Left lung (tissue), 14 donors: ENCODE measurements at regions of chr7 and their contacts with region 1.

Region 1: GRCh38 chr7:31633894-31634494 is 53.0 kb upstream of the PPP1R17 start:
- DNase-seq: peak in 2 of 4 donors; percentile 48 to 78
- ATAC-seq: peak; percentile 98
- H3K4me3 ChIP-seq: no peak overlapping the region
- H3K27ac ChIP-seq: no peak overlapping the region
- H3K4me1 ChIP-seq: no peaks in the 10 kb centered on the region
- H3K27me3 ChIP-seq: no peaks in the 10 kb centered on the region
- CTCF ChIP-seq: peak; percentile 54 to 58

Region 2: GRCh38 chr7:31134246-31135188 is 499.5 kb before region 1 on chr7:
- intact Hi-C with region 1: loop called in 1 of 2 experiments (anchors 10 kb)
- DNase-seq: peak; percentile 55 to 86 (median 76)
- ATAC-seq: peak; percentile 99
- H3K4me3 ChIP-seq: no peak overlapping the region
- H3K27ac ChIP-seq: no peak overlapping the region
- H3K4me1 ChIP-seq: no peaks in the 10 kb centered on the region
- H3K27me3 ChIP-seq: no peaks in the 10 kb centered on the region
- CTCF ChIP-seq: peak; percentile 74 to 79

Region 3: GRCh38 chr7:31443457-31443856 is 190.5 kb before region 1 on chr7:
- intact Hi-C with region 1: loop called in 1 of 2 experiments (anchors 10 kb)
- DNase-seq: no peak
- ATAC-seq: peak; percentile 93
- H3K4me3 ChIP-seq: no peak overlapping the region
- H3K27ac ChIP-seq: no peak overlapping the region
- H3K4me1 ChIP-seq: no peaks in the 10 kb centered on the region
- H3K27me3 ChIP-seq: peaks cover 0 to 7% of the 10 kb centered on the region in 2 donors
- CTCF ChIP-seq: peak; percentile 66 to 91

Region 4: DNA sequence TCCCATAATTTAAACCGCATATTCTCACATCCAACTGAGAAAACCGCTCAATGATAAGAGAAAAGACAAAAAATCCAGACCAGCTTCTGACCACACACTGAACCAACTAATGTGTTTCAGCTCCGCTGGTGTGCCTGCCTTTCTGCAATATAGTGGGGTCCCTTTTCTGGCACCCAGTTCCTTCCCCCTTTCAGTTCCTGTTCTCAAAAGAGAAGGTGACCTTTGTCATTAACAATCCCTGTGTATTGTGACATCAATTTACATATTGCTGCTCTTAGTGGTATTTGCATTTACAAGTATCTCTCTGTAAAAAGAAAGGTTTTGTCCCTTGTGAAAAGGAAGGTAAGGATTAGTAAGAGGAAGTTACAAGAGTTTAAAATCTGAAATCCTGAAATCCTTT is 54.4 kb after region 1 on chr7:
- intact Hi-C with region 1: no loop called
- DNase-seq: no peak
- ATAC-seq: peak; percentile 35
- H3K4me3 ChIP-seq: no peak overlapping the region
- H3K27ac ChIP-seq: no peak overlapping the region
- H3K4me1 ChIP-seq: peaks cover 0 to 6% of the 10 kb centered on the region in 2 donors
- H3K27me3 ChIP-seq: no peaks in the 10 kb centered on the region
- CTCF ChIP-seq: no peak

Region 5: GRCh38 chr7:31710171-31710570 is 76.2 kb after region 1 on chr7:
- intact Hi-C with region 1: no loop called
- DNase-seq: no peak
- ATAC-seq: no peak
- H3K4me3 ChIP-seq: no peak overlapping the region
- H3K27ac ChIP-seq: no peak overlapping the region
- H3K4me1 ChIP-seq: no peaks in the 10 kb centered on the region
- H3K27me3 ChIP-seq: no peaks in the 10 kb centered on the region
- CTCF ChIP-seq: no peak